Caco-2 (cell line): ENCODE measurements at regions of chr1 and their contacts with region 1.

Region 1: DNA sequence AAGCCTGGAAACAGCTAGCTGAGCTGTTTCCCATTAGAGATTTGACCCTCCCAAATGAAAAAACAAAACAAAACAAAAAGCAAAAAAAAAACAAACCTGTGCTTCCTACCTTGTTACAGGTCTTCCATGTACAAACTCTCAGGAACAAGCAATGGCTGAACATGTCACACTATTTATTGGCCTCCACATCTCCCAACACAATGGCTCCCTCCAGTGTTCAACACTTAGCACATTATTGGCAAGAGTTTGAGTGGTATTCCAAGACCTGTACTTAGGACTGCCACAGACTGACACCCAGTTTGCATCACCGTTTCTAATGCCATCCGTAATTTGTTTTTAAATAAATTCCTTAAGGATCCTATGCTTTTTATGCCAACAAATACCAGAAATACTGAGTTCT is 195.0 kb upstream of the OLFM3 start:
- DNase-seq: peak; percentile 34 to 40
- H3K4me3 ChIP-seq: no peak overlapping the region
- H3K4me3 Mint-ChIP-seq: no peak overlapping the region
- H3K27ac Mint-ChIP-seq: no peak overlapping the region
- H3K4me1 ChIP-seq: no peaks in the 10 kb centered on the region
- H3K4me1 Mint-ChIP-seq: no peaks in the 10 kb centered on the region
- H3K27me3 ChIP-seq: no peaks in the 10 kb centered on the region
- H3K27me3 Mint-ChIP-seq: no peaks in the 10 kb centered on the region
- CTCF ChIP-seq: peak; percentile 36 to 40

Region 2: DNA sequence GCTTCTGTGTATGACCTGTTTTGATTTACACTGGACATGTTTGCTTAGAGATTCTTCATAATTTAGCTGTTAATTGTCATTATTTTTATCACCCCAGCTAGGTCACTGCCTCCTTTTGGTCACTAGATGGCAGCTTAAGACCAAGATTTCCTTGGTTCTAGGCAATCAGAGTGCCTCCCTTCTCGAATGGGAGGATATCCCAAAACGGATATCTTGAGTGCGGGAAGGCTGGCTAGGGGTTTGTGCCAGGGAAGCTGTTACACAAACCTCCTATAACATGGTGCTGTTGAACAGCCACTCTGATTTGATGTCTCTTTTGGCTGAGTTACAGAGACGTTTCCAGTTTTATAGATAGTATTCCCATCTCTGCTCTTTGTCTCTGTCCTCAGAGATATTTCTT is 671.4 kb before region 1 on chr1:
- CTCF ChIA-PET with region 1: no interaction called
- POLR2A ChIA-PET with region 1: no interaction called
- intact Hi-C with region 1: loop called (anchors 1 kb)
- DNase-seq: peak; percentile 14 to 23
- H3K4me3 ChIP-seq: no peak overlapping the region
- H3K4me3 Mint-ChIP-seq: no peak overlapping the region
- H3K27ac Mint-ChIP-seq: no peak overlapping the region
- H3K4me1 ChIP-seq: no peaks in the 10 kb centered on the region
- H3K4me1 Mint-ChIP-seq: no peaks in the 10 kb centered on the region
- H3K27me3 ChIP-seq: no peaks in the 10 kb centered on the region
- H3K27me3 Mint-ChIP-seq: no peaks in the 10 kb centered on the region
- CTCF ChIP-seq: peak; percentile 59 to 61

Region 3: DNA sequence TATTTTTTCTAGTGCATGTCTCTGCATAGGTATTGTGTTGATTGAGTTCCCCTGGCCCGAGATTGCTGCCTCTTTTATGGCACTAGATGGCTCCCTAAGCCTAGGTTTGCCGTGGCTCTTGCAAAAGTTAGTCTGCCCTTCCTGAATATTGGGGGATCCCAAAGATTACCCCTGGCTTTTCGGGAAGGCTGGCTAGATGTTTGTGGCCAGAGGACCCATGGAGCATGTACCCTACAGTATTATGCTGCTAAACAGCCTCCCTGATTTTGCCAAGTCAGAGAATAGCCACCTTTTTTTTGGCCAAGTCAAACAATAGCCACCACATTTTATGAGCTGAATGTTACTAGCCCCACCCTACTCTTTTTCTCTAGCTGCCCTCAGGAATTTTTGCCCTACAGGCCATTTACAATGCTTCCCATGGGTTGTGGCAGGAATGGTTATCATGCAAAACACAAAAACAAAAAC is 538.2 kb before region 1 on chr1:
- CTCF ChIA-PET with region 1: interaction called, 3 read pairs
- POLR2A ChIA-PET with region 1: no interaction called
- intact Hi-C with region 1: loop called (anchors 1 kb)
- DNase-seq: peak; percentile 12 to 20
- H3K4me3 ChIP-seq: no peak overlapping the region
- H3K4me3 Mint-ChIP-seq: no peak overlapping the region
- H3K27ac Mint-ChIP-seq: no peak overlapping the region
- H3K4me1 ChIP-seq: no peaks in the 10 kb centered on the region
- H3K4me1 Mint-ChIP-seq: no peaks in the 10 kb centered on the region
- H3K27me3 ChIP-seq: no peaks in the 10 kb centered on the region
- H3K27me3 Mint-ChIP-seq: no peaks in the 10 kb centered on the region
- CTCF ChIP-seq: peak; percentile 17 to 33

Region 4: GRCh38 chr1:101769520-101769919 is 422.2 kb before region 1 on chr1:
- CTCF ChIA-PET with region 1: no interaction called
- POLR2A ChIA-PET with region 1: no interaction called
- intact Hi-C with region 1: loop called (anchors 1 kb)
- DNase-seq: peak in 1 of 2 experiments; percentile 6
- H3K4me3 ChIP-seq: no peak overlapping the region
- H3K4me3 Mint-ChIP-seq: no peak overlapping the region
- H3K27ac Mint-ChIP-seq: no peak overlapping the region
- H3K4me1 ChIP-seq: no peaks in the 10 kb centered on the region
- H3K4me1 Mint-ChIP-seq: no peaks in the 10 kb centered on the region
- H3K27me3 ChIP-seq: no peaks in the 10 kb centered on the region
- H3K27me3 Mint-ChIP-seq: no peaks in the 10 kb centered on the region
- CTCF ChIP-seq: peak; percentile 29 to 30

Region 5: DNA sequence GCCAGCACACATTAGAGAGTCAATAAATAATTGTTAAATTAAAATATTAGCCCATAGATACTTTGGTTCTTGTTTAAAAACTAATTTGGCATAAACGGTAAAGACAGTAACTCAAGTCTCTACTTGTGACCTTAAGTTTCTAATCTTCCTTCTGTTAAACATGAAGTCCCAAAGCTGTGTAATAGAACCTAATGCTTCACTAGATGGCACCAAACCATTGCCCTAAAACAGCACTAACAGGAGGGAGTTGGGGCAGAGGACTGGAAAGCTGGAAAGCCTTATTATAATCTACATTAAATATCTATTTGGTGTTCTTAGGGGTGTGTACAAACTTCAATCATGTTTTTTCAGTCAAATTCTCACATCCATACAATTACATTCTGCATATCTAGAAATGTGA is 371.7 kb before region 1 on chr1:
- CTCF ChIA-PET with region 1: no interaction called
- POLR2A ChIA-PET with region 1: no interaction called
- intact Hi-C with region 1: loop called (anchors 1 kb)
- DNase-seq: peak in 1 of 2 experiments; percentile 9
- H3K4me3 ChIP-seq: no peak overlapping the region
- H3K4me3 Mint-ChIP-seq: no peak overlapping the region
- H3K27ac Mint-ChIP-seq: no peak overlapping the region
- H3K4me1 ChIP-seq: no peaks in the 10 kb centered on the region
- H3K4me1 Mint-ChIP-seq: no peaks in the 10 kb centered on the region
- H3K27me3 ChIP-seq: no peaks in the 10 kb centered on the region
- H3K27me3 Mint-ChIP-seq: peaks cover 6% of the 10 kb centered on the region
- CTCF ChIP-seq: peak; percentile 18 to 41

Region 6: DNA sequence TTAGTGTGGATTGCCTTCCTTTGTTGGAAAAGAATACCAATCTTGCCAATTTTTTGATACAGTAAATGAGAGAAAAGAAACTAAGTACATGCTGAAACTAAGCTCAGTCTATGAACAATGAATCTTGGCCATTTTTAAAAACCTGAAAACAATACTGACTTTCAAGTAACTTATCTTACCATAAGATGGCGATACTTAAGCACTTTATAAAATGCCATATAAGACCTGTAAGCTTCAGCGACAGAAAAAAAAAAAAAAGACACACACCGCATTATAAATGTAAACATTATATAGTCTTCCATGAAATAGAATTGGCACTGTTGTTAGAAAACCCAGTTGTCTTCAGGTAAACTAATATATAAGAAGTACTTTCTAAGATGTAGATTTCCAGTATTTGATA is 198.0 kb before region 1 on chr1:
- CTCF ChIA-PET with region 1: no interaction called
- POLR2A ChIA-PET with region 1: no interaction called
- intact Hi-C with region 1: loop called (anchors 1 kb)
- DNase-seq: no peak
- H3K4me3 ChIP-seq: no peak overlapping the region
- H3K4me3 Mint-ChIP-seq: no peak overlapping the region
- H3K27ac Mint-ChIP-seq: no peak overlapping the region
- H3K4me1 ChIP-seq: no peaks in the 10 kb centered on the region
- H3K4me1 Mint-ChIP-seq: no peaks in the 10 kb centered on the region
- H3K27me3 ChIP-seq: no peaks in the 10 kb centered on the region
- H3K27me3 Mint-ChIP-seq: no peaks in the 10 kb centered on the region
- CTCF ChIP-seq: no peak

Region 7: GRCh38 chr1:102181341-102181740 is 10.4 kb before region 1 on chr1:
- CTCF ChIA-PET with region 1: no interaction called
- POLR2A ChIA-PET with region 1: no interaction called
- intact Hi-C with region 1: no loop called
- DNase-seq: no peak
- H3K4me3 ChIP-seq: no peak overlapping the region
- H3K4me3 Mint-ChIP-seq: no peak overlapping the region
- H3K27ac Mint-ChIP-seq: no peak overlapping the region
- H3K4me1 ChIP-seq: no peaks in the 10 kb centered on the region
- H3K4me1 Mint-ChIP-seq: no peaks in the 10 kb centered on the region
- H3K27me3 ChIP-seq: no peaks in the 10 kb centered on the region
- H3K27me3 Mint-ChIP-seq: no peaks in the 10 kb centered on the region
- CTCF ChIP-seq: no peak

Region 8: GRCh38 chr1:102434421-102434820 is 242.7 kb after region 1 on chr1:
- CTCF ChIA-PET with region 1: no interaction called
- POLR2A ChIA-PET with region 1: no interaction called
- intact Hi-C with region 1: loop called (anchors 5 kb)
- DNase-seq: peak; percentile 32 to 36
- H3K4me3 ChIP-seq: no peak overlapping the region
- H3K4me3 Mint-ChIP-seq: no peak overlapping the region
- H3K27ac Mint-ChIP-seq: no peak overlapping the region
- H3K4me1 ChIP-seq: no peaks in the 10 kb centered on the region
- H3K4me1 Mint-ChIP-seq: no peaks in the 10 kb centered on the region
- H3K27me3 ChIP-seq: no peaks in the 10 kb centered on the region
- H3K27me3 Mint-ChIP-seq: no peaks in the 10 kb centered on the region
- CTCF ChIP-seq: peak; percentile 33 to 43